ENCODE measurements at regions of chr1 and their contacts with region 1.

Region 1: DNA sequence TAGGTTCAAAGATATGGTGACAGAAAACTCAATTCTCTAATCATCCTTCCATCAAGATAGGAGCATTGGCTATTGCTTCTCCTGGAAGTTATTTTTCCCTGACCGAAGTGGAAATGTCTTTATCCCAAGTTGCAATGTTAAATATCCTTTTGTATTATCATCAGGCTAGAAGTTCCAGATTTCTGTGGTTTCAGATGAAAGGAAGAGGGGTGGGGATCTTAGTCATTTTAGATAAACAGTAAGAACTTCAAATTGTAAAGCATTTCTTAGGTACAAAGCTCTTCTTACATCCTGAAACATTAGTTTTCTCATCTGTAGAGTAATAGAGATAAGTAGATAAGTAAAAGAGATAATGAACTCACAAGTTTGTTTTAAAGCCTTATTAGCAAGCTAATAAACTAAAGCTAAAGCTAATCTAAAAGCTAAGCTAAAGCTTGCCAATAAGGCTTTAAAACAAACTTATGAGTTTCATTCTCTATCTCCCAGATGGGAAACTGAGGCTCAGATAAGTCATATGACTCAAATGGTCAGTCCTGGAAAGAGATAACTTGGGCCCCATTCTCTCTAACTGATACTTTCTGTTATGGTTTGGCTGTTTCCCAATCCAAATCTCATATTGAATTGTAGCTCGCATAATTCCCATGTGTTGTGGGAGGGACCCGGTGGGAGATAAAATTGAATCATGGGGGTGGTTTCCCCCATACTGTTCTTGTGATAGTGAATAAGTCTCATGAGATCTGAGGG is 99.2 kb upstream of the KCNK2 start:
- DNase-seq: peak in 1 of 2 experiments; percentile 18
- H3K4me3 ChIP-seq: no peak overlapping the region
- H3K4me3 Mint-ChIP-seq: no peak overlapping the region
- H3K27ac Mint-ChIP-seq: peak overlapping the region; percentile 51
- H3K4me1 ChIP-seq: peaks cover 15% of the 10 kb centered on the region
- H3K4me1 Mint-ChIP-seq: peaks cover 20% of the 10 kb centered on the region
- H3K27me3 ChIP-seq: no peaks in the 10 kb centered on the region
- H3K27me3 Mint-ChIP-seq: peaks cover 11% of the 10 kb centered on the region
- CTCF ChIP-seq: no peak

Region 2: DNA sequence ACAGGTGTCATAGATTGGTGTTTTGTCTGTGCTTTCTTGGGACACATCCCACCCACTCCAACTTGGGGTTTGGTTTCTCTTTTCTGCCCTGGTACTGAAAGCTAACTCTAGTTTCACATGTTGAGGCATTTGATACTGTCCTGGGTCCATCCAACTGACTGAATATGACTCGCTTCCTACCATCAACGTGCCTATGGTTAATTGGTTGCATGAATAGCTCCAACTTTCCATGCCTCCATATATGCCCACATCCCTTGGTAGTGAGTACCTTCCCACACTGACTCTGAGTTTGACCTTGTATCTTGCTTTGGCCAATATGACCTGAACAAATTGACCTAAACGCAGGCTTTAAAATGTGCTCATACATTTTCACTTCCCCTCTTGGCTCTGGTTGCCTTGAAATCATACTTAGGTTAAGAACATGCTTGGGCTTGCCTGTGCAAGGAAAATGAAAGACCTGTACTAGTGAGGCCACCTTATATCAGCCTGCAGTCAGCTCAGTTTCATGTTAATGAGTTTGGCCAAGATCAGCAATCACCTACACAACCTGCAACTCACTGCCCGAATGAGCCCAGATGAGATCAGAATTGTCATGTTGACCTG is 18.2 kb after region 1 on chr1:
- CTCF ChIA-PET with region 1: no interaction called
- POLR2A ChIA-PET with region 1: no interaction called
- intact Hi-C with region 1: loop called (anchors 2 kb)
- DNase-seq: no peak
- H3K4me3 ChIP-seq: no peak overlapping the region
- H3K4me3 Mint-ChIP-seq: no peak overlapping the region
- H3K27ac Mint-ChIP-seq: no peak overlapping the region
- H3K4me1 ChIP-seq: peaks cover 31% of the 10 kb centered on the region
- H3K4me1 Mint-ChIP-seq: peaks cover 21% of the 10 kb centered on the region
- H3K27me3 ChIP-seq: no peaks in the 10 kb centered on the region
- H3K27me3 Mint-ChIP-seq: no peaks in the 10 kb centered on the region
- CTCF ChIP-seq: no peak

Region 3: DNA sequence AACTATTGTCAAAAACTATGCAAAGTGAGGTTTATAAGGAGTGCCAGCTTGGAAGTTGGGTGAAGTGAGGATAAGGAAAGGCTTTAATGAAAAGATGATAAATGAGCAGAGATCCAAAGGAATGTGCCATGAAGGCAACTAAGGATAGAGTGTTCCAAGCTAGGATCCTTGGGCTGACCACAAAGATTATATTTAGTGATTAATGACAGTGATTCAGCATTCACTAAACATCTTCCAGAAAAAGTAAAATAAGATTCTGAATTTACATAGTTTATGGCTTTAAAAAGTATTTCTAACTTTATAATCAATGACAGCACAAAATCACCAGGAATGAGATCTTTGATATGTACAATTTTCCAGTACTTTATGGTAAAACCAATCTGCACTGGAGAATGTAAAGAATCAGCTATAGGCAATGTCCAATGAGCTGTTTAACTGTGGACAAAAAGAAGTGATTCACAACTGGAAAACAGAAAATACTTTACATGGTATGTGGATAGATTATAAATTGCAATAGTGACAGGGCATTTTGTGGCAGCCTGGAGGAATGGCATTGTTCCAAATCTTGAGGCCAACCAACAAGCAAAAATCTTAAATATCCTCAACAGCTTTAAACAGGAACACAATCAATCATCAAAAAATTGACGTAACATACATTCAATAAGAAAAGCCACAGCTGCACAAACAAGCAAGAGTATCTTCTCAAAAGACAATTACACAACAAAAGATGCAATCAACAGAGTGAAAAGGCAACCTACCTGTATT is 492.7 kb after region 1 on chr1:
- CTCF ChIA-PET with region 1: no interaction called
- POLR2A ChIA-PET with region 1: no interaction called
- intact Hi-C with region 1: no loop called
- DNase-seq: no peak
- H3K4me3 ChIP-seq: no peak overlapping the region
- H3K4me3 Mint-ChIP-seq: no peak overlapping the region
- H3K27ac Mint-ChIP-seq: no peak overlapping the region
- H3K4me1 ChIP-seq: no peaks in the 10 kb centered on the region
- H3K4me1 Mint-ChIP-seq: no peaks in the 10 kb centered on the region
- H3K27me3 ChIP-seq: no peaks in the 10 kb centered on the region
- H3K27me3 Mint-ChIP-seq: peaks cover 5% of the 10 kb centered on the region
- CTCF ChIP-seq: no peak